ENCODE measurements at regions of chr17 and their contacts with region 1.

Region 1: GRCh38 chr17:69047368-69048263 is 13.1 kb downstream of the ABCA9 start:
- DNase-seq: peak; percentile 91 to 95
- H3K4me3 ChIP-seq: no peak overlapping the region
- H3K4me3 Mint-ChIP-seq: peak overlapping the region; percentile 30
- H3K27ac Mint-ChIP-seq: peak overlapping the region; percentile 88
- H3K4me1 ChIP-seq: peaks cover 38% of the 10 kb centered on the region
- H3K4me1 Mint-ChIP-seq: peaks cover 7% of the 10 kb centered on the region
- H3K27me3 ChIP-seq: no peaks in the 10 kb centered on the region
- H3K27me3 Mint-ChIP-seq: no peaks in the 10 kb centered on the region
- CTCF ChIP-seq: no peak

Region 2: DNA sequence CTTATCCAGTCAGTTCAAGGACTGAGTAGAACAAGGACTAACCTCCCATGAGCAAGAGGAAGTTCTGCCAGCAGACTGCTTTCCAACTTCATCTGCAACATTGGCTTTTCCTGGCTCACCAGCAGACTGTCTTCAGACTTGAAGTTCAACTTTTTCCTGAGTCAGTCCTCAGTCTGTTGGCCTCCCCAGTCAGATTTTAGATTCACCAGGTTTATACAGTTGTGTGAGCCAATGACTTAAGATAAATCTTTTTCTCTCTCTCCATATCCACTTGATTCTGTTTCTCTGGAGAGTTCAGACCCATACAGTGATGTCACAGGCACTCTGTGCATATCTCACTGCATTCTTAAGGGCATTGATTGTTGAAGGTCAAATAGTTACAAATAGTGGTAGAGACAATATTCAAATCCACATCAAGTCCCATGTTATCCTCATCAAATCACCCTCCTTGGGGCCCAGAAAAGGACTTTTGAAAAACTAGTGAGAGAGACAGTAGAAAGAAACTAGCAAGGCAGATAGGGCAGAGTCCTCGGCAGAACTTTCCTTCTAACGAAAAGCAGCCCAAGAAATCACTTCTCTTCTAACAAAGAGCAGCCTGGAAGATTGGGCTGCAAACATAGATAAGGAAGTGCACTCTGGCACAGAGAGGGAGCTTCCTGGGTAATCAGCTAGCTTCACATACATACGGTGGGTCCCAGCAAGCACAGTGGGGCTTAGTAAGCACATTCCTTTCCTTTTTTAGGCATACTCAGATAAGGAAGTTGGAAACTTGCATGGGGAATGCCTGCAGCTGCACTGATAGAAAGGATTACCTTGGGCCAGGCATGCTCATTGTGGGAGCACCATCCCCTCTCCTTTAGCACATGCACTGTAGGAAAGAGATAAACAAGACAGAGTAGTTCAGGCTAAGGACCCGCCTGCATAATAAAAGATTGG is 314.1 kb before region 1 on chr17:
- CTCF ChIA-PET with region 1: no interaction called
- POLR2A ChIA-PET with region 1: no interaction called
- intact Hi-C with region 1: loop called (anchors 1 kb)
- DNase-seq: peak; percentile 82 to 95
- H3K4me3 ChIP-seq: no peak overlapping the region
- H3K4me3 Mint-ChIP-seq: peak overlapping the region; percentile 45
- H3K27ac Mint-ChIP-seq: peak overlapping the region; percentile 90
- H3K4me1 ChIP-seq: peaks cover 42% of the 10 kb centered on the region
- H3K4me1 Mint-ChIP-seq: peaks cover 38% of the 10 kb centered on the region
- H3K27me3 ChIP-seq: no peaks in the 10 kb centered on the region
- H3K27me3 Mint-ChIP-seq: no peaks in the 10 kb centered on the region
- CTCF ChIP-seq: no peak

Region 3: GRCh38 chr17:68954863-68955841 is 92.5 kb before region 1 on chr17 and contains the start of gene ABCA8:
- CTCF ChIA-PET with region 1: no interaction called
- POLR2A ChIA-PET with region 1: no interaction called
- intact Hi-C with region 1: no loop called
- DNase-seq: no peak
- H3K4me3 ChIP-seq: no peak within 1 kb of the TSS
- H3K4me3 Mint-ChIP-seq: no peak within 1 kb of the TSS
- H3K27ac Mint-ChIP-seq: peak within 1 kb of the TSS; percentile 25
- H3K4me1 ChIP-seq: peaks cover 14% of the 10 kb centered on the region
- H3K4me1 Mint-ChIP-seq: peaks cover 12% of the 10 kb centered on the region
- H3K27me3 ChIP-seq: no peaks in the 10 kb centered on the region
- H3K27me3 Mint-ChIP-seq: no peaks in the 10 kb centered on the region
- CTCF ChIP-seq: no peak
- total RNA-seq, gene ABCA8: 0.32 and 0.91 TPM in 2 replicates

Region 4: DNA sequence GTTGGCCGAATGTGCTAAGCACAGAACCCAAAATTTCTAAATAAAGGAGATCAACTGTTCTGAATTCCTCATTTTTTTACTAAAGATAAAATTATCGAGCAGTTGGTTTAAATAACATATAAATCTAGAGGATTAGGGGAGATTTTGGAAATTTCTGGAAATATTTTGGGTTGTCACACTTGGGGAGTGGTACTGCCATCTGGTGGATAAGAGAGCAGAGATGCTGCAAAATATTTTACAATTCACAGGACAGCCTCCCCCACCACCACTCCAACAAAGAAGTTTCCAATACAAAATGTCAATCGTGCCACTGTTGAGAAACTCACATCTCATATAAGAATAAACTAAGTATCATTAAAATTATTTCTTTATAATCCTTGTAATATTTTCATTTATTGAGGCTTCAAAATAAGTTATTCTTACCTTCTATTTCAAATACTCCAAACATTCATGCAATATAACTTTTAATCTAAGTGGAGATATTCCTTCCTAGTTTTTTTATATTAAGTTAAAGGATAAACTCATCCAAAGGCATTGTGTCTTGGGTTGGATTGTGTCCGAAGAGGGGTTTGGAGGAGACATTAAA is 75.4 kb before region 1 on chr17:
- CTCF ChIA-PET with region 1: no interaction called
- POLR2A ChIA-PET with region 1: no interaction called
- intact Hi-C with region 1: loop called (anchors 5 kb)
- DNase-seq: peak in 1 of 2 experiments; percentile 49
- H3K4me3 ChIP-seq: no peak overlapping the region
- H3K4me3 Mint-ChIP-seq: no peak overlapping the region
- H3K27ac Mint-ChIP-seq: no peak overlapping the region
- H3K4me1 ChIP-seq: no peaks in the 10 kb centered on the region
- H3K4me1 Mint-ChIP-seq: no peaks in the 10 kb centered on the region
- H3K27me3 ChIP-seq: no peaks in the 10 kb centered on the region
- H3K27me3 Mint-ChIP-seq: no peaks in the 10 kb centered on the region
- CTCF ChIP-seq: peak; percentile 60 to 72

Region 5: GRCh38 chr17:69103557-69104233 is 56.1 kb after region 1 on chr17:
- CTCF ChIA-PET with region 1: no interaction called
- POLR2A ChIA-PET with region 1: no interaction called
- intact Hi-C with region 1: loop called (anchors 1 kb)
- DNase-seq: peak; percentile 89
- H3K4me3 ChIP-seq: no peak overlapping the region
- H3K4me3 Mint-ChIP-seq: peak overlapping the region; percentile 30
- H3K27ac Mint-ChIP-seq: peak overlapping the region; percentile 58
- H3K4me1 ChIP-seq: peaks cover 19% of the 10 kb centered on the region
- H3K4me1 Mint-ChIP-seq: peaks cover 7% of the 10 kb centered on the region
- H3K27me3 ChIP-seq: no peaks in the 10 kb centered on the region
- H3K27me3 Mint-ChIP-seq: no peaks in the 10 kb centered on the region
- CTCF ChIP-seq: no peak

Region 6: DNA sequence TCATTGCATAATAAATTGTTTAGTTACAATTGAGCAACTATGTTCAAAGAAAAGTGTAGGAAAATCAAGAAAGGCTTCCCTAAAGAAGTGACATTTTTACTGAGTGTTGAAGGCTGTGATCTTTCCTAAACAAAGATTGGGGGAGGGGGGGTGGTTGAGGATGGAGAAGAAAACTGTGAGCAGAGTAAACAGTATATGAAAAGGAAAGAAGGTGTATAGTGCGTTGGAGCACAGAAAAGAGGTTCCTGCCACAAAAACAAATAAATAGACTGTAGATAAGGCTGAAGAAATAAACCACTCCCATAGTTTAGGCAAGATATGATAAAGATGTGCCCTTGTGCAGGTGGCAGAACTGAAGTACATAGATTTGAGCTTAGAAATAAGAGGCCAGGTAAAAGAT is 172.5 kb after region 1 on chr17:
- CTCF ChIA-PET with region 1: no interaction called
- POLR2A ChIA-PET with region 1: no interaction called
- intact Hi-C with region 1: loop called (anchors 2 kb)
- DNase-seq: peak in 1 of 2 experiments; percentile 58
- H3K4me3 ChIP-seq: no peak overlapping the region
- H3K4me3 Mint-ChIP-seq: no peak overlapping the region
- H3K27ac Mint-ChIP-seq: no peak overlapping the region
- H3K4me1 ChIP-seq: no peaks in the 10 kb centered on the region
- H3K4me1 Mint-ChIP-seq: peaks cover 16% of the 10 kb centered on the region
- H3K27me3 ChIP-seq: no peaks in the 10 kb centered on the region
- H3K27me3 Mint-ChIP-seq: no peaks in the 10 kb centered on the region
- CTCF ChIP-seq: no peak